ENCODE measurements at regions of chr10 and their contacts with region 1.

Region 1: DNA sequence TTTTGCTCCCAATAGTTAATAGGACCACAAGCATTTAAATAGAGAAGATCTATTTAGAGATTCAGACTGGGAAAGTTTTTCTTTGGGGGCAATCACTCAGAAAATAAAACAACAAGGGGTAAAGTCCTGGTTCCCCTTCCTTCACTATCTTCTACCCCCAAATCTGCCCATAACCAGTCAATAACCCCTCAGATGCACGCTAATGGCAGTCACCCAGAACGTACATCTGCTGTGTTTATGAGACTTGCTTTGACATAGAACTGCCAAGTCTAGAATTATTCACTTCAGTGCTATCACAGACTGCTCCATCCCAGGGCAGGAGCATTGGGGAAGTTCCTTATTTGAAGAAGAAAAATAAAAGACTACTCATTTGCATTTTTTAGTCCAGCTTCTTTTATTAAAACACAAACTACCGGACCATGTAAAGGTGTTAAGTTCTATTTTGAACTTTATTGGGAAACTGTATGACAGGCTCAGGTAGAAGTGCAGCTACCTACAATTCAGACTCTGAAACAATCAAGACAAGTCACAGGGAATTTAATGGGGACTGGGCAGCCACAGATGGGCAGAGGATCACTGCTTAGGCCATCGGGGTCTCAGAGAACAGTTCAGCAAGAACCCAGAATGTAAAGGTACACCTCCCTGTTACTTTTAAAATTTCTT is 38.4 kb downstream of the ANK3 start:
- DNase-seq: peak in 12 of 42 donors; percentile 8 to 67 (median 44)

Region 2: DNA sequence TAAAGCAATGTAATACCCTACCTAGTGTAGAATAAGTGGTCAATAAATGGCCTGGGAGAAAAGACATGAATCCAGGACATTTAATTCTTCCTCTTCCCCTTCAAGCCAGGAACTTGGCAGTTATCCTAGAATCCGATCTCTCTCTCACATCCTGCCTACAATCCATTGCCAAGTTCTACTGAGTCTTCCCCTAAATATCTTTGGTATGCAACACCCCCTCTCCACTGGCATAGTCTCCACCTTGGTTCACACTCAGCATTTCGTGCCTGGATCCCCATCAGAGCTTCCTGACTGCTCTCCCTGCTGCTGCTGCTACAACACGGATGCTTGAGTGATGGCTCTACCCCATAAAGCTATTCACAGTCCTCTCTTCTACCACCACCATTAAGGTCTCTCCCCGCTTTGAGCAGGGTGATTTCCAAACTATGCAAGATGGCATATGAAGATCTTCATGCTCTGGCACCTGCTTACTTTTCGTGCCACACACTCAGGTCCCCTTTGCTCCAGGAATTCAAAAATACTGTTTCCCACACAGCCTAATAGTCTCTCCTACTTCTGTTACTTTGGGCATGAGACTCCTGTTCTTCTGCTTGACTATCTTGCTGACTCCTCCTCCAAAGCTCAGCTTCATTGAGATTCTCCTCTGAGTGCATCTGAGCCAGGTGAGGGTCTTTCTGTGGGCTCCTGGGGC is 33.5 kb after region 1 on chr10:
- intact Hi-C with region 1: loop called (anchors 5 kb)
- DNase-seq: peak in 1 of 42 donors; percentile 28

Measured in head of caudate nucleus (tissue), 42 donors.